Motor neuron (in vitro differentiated cells): ENCODE measurements at regions of chr4 and their contacts with region 1.

Region 1: GRCh38 chr4:109424093-109424841 is 9.3 kb upstream of the SEC24B start:
- ATAC-seq: peak in 5 of 8 experiments; percentile 44 to 86 (median 67)
- H3K4me3 ChIP-seq: no peak overlapping the region
- H3K27ac ChIP-seq: no peak overlapping the region
- H3K4me1 ChIP-seq: peaks cover 2 to 8% of the 10 kb centered on the region in 2 donors

Region 2: GRCh38 chr4:109690690-109691410 is 266.6 kb after region 1 on chr4:
- in situ Hi-C with region 1: no loop called
- ATAC-seq: no peak
- H3K4me3 ChIP-seq: no peak overlapping the region
- H3K27ac ChIP-seq: no peak overlapping the region
- H3K4me1 ChIP-seq: no peaks in the 10 kb centered on the region

Region 3: DNA sequence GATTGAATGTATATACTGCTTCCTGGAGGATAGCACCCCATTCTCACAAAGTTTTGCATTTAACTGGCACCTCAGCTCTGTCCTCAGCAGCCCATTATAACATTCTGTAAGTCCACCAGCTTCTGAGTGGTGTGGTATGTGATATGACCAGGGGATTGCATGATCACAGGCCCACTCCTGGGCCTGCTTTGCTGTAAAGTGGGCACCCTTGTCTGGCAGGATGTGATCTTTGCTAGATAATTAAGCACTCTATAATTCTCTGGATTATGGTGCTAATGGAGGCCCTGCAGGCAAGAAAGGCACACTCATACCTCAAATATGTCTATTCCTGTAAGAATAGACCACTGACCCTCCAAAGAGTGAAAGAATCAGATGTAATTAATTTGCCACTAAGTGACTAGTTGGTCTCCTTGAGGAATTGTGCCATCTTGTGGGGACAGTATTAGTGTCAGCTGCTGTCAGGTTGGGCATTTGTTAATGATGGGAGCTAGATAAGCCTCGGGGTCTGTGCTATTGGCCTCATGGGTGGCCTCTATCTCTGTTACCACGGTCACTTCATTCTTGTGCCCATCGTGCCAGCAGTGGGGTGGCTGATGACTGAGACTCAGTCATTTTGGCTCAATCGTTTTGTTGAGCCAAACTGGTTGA is 379.8 kb after region 1 on chr4:
- in situ Hi-C with region 1: loop called in 4 of 9 experiments (anchors 10 to 25 kb)
- ATAC-seq: peak in 6 of 8 experiments; percentile 20 to 89 (median 66)
- H3K4me3 ChIP-seq: no peak overlapping the region
- H3K27ac ChIP-seq: no peak overlapping the region
- H3K4me1 ChIP-seq: no peaks in the 10 kb centered on the region

Region 4: GRCh38 chr4:109836986-109837385 is 412.7 kb after region 1 on chr4:
- in situ Hi-C with region 1: loop called in 1 of 9 experiments (anchors 10 kb)
- ATAC-seq: no peak
- H3K4me3 ChIP-seq: no peak overlapping the region
- H3K27ac ChIP-seq: no peak overlapping the region
- H3K4me1 ChIP-seq: no peaks in the 10 kb centered on the region

Region 5: GRCh38 chr4:109910256-109910655 is 486.0 kb after region 1 on chr4:
- in situ Hi-C with region 1: no loop called
- ATAC-seq: no peak
- H3K4me3 ChIP-seq: no peak overlapping the region
- H3K27ac ChIP-seq: no peak overlapping the region
- H3K4me1 ChIP-seq: peaks cover 0 to 32% of the 10 kb centered on the region in 2 donors

Region 6: DNA sequence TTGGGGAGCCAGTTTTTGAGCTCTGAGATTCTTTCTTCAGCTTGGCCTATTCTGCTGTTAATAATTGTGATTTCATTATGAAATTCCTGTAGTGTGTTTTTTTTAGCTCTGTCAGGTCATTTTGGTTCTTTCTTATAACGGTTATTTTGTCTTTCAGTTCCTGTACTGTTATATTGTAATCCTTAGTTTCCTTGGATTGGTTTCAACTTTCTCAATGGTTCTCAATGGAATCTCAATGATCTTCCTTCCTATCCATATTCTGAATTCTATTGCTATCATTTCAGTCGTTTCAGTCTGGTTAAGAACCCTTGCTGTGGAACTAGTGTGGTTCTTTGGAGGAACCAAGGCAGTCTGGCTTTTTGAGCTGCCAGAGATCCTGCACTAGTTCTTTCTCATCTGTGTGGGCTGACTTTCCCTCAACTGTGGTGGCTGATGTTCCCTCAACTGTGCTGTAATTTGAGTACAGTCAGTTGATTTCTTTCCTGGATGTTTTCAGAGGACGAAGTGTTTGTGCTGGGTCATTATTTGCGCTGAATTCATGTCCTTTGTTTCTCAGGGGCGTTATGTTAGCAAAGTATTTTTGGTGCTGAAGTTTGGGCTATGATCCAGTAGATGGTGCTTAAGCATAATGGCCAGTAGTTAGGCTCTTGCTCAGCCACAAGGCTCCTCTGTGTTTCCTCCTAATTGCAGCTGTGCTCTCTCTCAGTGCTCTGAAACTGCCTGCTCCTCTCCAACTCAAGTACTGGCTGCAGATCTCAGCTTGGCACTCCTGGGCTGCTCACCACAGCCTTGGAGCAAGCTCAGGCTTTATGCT is 1079.2 kb after region 1 on chr4:
- in situ Hi-C with region 1: no loop called
- ATAC-seq: peak in 4 of 8 experiments; percentile 16 to 78 (median 50)
- H3K4me3 ChIP-seq: no peak overlapping the region
- H3K27ac ChIP-seq: no peak overlapping the region
- H3K4me1 ChIP-seq: no peaks in the 10 kb centered on the region

Region 7: GRCh38 chr4:110586131-110586850 is 1162.0 kb after region 1 on chr4:
- in situ Hi-C with region 1: no loop called
- ATAC-seq: peak in 4 of 8 experiments; percentile 34 to 92 (median 90)
- H3K4me3 ChIP-seq: no peak overlapping the region
- H3K27ac ChIP-seq: no peak overlapping the region
- H3K4me1 ChIP-seq: no peaks in the 10 kb centered on the region